Endothelial cell of umbilical vein (primary cell): ENCODE measurements at regions of chr14 and their contacts with region 1.

Region 1: GRCh38 chr14:58107947-58108552 is 44.0 kb downstream of the ARMH4 start:
- DNase-seq: peak; percentile 67
- H3K4me3 ChIP-seq: no peak overlapping the region
- H3K27ac ChIP-seq: no peak overlapping the region
- H3K4me1 ChIP-seq: peaks cover 7% of the 10 kb centered on the region
- H3K27me3 ChIP-seq: peaks cover 7 to 9% of the 10 kb centered on the region in 2 experiments
- CTCF ChIP-seq: peak; percentile 39 to 49
- POLR2A ChIP-seq: no peak

Region 2: GRCh38 chr14:58152014-58152857 is 44.2 kb after region 1 on chr14 and contains the start of gene ARMH4:
- CTCF ChIA-PET with region 1: no interaction called
- POLR2A ChIA-PET with region 1: no interaction called
- dilution Hi-C with region 1: no loop called
- intact Hi-C with region 1: loop called (anchors 5 kb)
- DNase-seq: peak; percentile 81
- H3K4me3 ChIP-seq: peak within 1 kb of the TSS; percentile 51 to 58 (median 56)
- H3K27ac ChIP-seq: no peak within 1 kb of the TSS
- H3K4me1 ChIP-seq: peaks cover 10% of the 10 kb centered on the region
- H3K27me3 ChIP-seq: peaks cover 26 to 42% of the 10 kb centered on the region in 2 experiments
- CTCF ChIP-seq: peak in 1 of 2 donors; percentile 11
- POLR2A ChIP-seq: no peak
- total RNA-seq, gene ARMH4: 2.3 and 3.0 TPM in 2 replicates

Region 3: GRCh38 chr14:58166005-58166983 is 58.2 kb after region 1 on chr14:
- CTCF ChIA-PET with region 1: interaction called, 93 read pairs
- POLR2A ChIA-PET with region 1: no interaction called
- dilution Hi-C with region 1: no loop called
- intact Hi-C with region 1: loop called (anchors 1 kb)
- DNase-seq: peak; percentile 67
- H3K4me3 ChIP-seq: no peak overlapping the region
- H3K27ac ChIP-seq: no peak overlapping the region
- H3K4me1 ChIP-seq: no peaks in the 10 kb centered on the region
- H3K27me3 ChIP-seq: peaks cover 2 to 4% of the 10 kb centered on the region in 2 experiments
- CTCF ChIP-seq: peak; percentile 79 to 92
- POLR2A ChIP-seq: no peak

Region 4: GRCh38 chr14:58244556-58245387 is 136.7 kb after region 1 on chr14 and contains the start of gene PSMA3:
- CTCF ChIA-PET with region 1: interaction called, 3 read pairs
- POLR2A ChIA-PET with region 1: no interaction called
- dilution Hi-C with region 1: no loop called
- intact Hi-C with region 1: loop called (anchors 1 kb)
- DNase-seq: peak; percentile 98
- H3K4me3 ChIP-seq: peak within 1 kb of the TSS; percentile 77 to 98 (median 85)
- H3K27ac ChIP-seq: peak within 1 kb of the TSS; percentile 93
- H3K4me1 ChIP-seq: peaks cover 22% of the 10 kb centered on the region
- H3K27me3 ChIP-seq: no peaks in the 10 kb centered on the region
- CTCF ChIP-seq: no peak
- POLR2A ChIP-seq: peak; percentile 95
- total RNA-seq, gene PSMA3: 228 and 240 TPM in 2 replicates

Region 5: DNA sequence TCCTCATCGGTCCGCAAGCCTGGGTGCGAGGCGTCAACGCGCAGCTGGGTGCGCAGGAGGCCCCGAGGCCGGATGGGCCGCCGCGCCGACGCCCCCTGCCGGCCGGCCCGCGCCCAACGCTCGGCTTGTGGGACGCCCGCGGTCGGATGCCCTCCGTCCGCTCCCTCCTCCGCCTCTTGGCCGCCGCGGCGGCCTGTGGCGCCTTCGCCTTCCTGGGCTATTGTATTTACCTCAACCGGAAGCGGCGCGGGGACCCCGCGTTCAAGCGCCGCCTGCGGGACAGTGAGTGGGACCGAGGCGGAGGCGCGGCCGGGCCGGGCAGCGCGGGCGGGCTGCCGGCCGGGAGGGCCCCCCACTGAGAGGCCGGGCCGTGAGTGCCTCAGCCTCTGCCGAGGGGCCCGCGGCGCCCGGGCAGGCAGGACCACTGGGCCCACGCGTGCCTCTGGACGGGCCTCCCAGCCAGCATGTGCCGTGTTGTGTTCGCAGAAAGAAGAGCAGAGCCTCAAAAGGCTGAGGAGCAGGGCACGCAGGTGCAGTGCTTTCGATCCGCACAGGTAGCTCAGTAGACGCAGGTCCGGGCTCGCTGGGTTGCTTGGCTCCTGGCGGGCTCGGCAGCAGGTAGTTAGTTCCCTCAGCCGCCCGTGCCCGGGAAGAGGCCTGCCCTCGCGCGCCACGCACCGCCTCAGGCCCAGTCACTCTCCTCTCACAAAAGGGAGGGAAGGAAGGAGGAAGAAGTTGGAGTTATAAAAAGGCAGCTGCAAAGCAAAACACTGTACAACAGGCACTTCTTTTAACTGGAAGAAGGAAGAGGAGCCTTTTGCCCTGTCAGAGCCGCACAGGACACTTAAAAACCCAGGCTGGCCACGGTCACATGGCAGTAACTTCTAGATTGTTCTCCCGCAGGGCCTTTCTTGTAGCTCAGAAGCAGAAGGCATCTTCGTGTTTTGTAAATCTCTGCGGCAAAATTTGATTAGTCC is 288.1 kb after region 1 on chr14 and contains the start of gene TOMM20L:
- CTCF ChIA-PET with region 1: interaction called, 6 read pairs
- POLR2A ChIA-PET with region 1: no interaction called
- dilution Hi-C with region 1: no loop called
- intact Hi-C with region 1: loop called (anchors 1 kb)
- DNase-seq: peak; percentile 68
- H3K4me3 ChIP-seq: peak within 1 kb of the TSS; percentile 1 to 52 (median 51)
- H3K27ac ChIP-seq: peak within 1 kb of the TSS; percentile 40
- H3K4me1 ChIP-seq: peaks cover 10% of the 10 kb centered on the region
- H3K27me3 ChIP-seq: no peaks in the 10 kb centered on the region
- CTCF ChIP-seq: peak; percentile 58 to 97
- POLR2A ChIP-seq: peak; percentile 54
- total RNA-seq, gene TOMM20L: not detected in 2 replicates